Mammary epithelial cell (primary cell): ENCODE measurements at regions of chrX and their contacts with region 1.

Region 1: GRCh38 chrX:119943185-119943988 is at the start of gene NKAP:
- DNase-seq: peak; percentile 87
- H3K4me3 ChIP-seq: peak within 1 kb of the TSS; percentile 57 to 69 (median 62)
- H3K27ac ChIP-seq: peak within 1 kb of the TSS; percentile 77
- H3K4me1 ChIP-seq: peaks cover 5% of the 10 kb centered on the region
- H3K27me3 ChIP-seq: no peaks in the 10 kb centered on the region
- CTCF ChIP-seq: no peak
- total RNA-seq, gene NKAP: 3.0 to 8.1 TPM

Region 2: GRCh38 chrX:119693040-119693995 is 250.1 kb before region 1 on chrX and contains the start of gene SEPTIN6:
- CTCF ChIA-PET with region 1: no interaction called
- dilution Hi-C with region 1: no loop called
- in situ Hi-C with region 1: no loop called
- intact Hi-C with region 1: loop called (anchors 5 kb)
- DNase-seq: peak; percentile 65
- H3K4me3 ChIP-seq: peak within 1 kb of the TSS; percentile 66 to 79 (median 70)
- H3K27ac ChIP-seq: peak within 1 kb of the TSS; percentile 29
- H3K4me1 ChIP-seq: peaks cover 8% of the 10 kb centered on the region
- H3K27me3 ChIP-seq: no peaks in the 10 kb centered on the region
- CTCF ChIP-seq: no peak
- total RNA-seq, gene SEPTIN6: 8.5 to 11.4 TPM

Region 3: DNA sequence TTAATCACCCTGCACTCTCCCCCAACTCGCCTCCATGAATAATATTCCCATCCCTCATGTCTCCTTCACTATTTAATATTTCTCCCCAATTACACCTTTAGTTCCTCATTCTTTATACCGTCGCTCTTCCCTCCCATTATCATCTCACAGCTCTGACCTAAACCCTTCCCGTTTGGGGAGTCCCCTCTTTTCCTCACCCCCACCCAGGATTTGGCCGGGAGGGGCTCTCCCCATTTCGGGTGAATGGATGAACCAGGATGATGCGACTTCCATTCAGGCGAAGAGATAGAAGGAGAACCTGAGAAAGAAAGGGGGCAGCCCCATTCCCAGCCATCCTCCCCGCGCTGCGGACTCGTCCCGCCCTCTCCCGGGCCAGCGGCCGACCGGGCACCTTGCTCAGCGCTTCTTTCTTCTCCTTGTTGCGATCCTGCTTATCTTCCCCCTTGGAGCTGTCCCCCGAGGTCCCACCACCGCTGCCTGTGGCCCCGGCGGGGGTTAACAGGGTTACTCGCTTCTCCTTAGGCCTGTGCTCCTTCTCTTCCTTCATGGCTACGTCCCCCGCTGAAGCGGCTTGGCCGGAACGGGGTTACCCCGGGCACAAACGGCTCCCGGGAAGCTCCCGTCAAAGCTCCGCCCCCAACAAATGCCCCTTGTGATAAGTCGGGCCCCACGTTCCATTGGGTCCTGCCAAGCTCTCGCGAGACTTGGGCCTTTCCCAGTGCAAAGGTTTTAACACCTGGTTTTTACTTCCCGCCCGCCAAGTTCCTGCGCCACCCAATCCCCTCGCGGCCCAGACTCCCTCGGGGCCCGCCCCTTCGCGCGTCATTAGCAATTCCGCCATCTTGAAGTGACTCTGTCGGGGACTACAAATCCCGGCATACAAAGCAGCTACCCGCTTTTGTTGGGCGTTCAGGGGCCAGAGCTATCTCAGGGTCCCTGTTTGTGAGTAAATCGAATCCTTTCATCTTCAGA is 90.7 kb before region 1 on chrX and contains the start of gene UPF3B:
- CTCF ChIA-PET with region 1: no interaction called
- dilution Hi-C with region 1: no loop called
- in situ Hi-C with region 1: no loop called
- intact Hi-C with region 1: loop called (anchors 1 kb)
- DNase-seq: peak; percentile 96
- H3K4me3 ChIP-seq: peak within 1 kb of the TSS; percentile 65 to 76 (median 71)
- H3K27ac ChIP-seq: peak within 1 kb of the TSS; percentile 51
- H3K4me1 ChIP-seq: no peaks in the 10 kb centered on the region
- H3K27me3 ChIP-seq: no peaks in the 10 kb centered on the region
- CTCF ChIP-seq: no peak
- total RNA-seq, gene UPF3B: 1.0 to 10.0 TPM

Region 4: GRCh38 chrX:119991005-119991771 is 47.8 kb after region 1 on chrX:
- CTCF ChIA-PET with region 1: no interaction called
- dilution Hi-C with region 1: no loop called
- in situ Hi-C with region 1: no loop called
- intact Hi-C with region 1: loop called (anchors 5 kb)
- DNase-seq: no peak
- H3K4me3 ChIP-seq: peak overlapping the region in 1 of 3 experiments; percentile 5
- H3K27ac ChIP-seq: no peak overlapping the region
- H3K4me1 ChIP-seq: no peaks in the 10 kb centered on the region
- H3K27me3 ChIP-seq: peaks cover 14% of the 10 kb centered on the region
- CTCF ChIP-seq: no peak

Region 5: DNA sequence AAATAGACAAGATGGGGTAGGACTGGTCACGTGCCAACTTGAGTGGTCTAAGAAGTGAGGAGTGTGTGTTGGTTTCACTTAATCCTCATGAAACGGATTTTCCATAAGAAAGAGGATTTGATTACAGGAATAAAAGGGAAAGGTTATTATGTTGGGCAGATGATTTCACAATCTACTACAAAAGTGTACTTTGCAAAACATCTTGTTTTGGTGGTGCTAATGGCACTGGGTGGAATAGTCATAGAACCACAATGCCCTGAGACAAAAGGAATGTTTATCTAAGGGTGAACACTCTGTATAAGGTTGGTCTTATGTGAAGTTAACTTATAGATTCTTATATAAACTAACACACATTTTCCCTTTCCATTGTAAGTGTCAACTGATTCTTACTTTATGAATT is 1149.6 kb after region 1 on chrX:
- CTCF ChIA-PET with region 1: no interaction called
- dilution Hi-C with region 1: no loop called
- in situ Hi-C with region 1: no loop called
- intact Hi-C with region 1: no loop called
- DNase-seq: no peak
- H3K4me3 ChIP-seq: no peak overlapping the region
- H3K27ac ChIP-seq: no peak overlapping the region
- H3K4me1 ChIP-seq: no peaks in the 10 kb centered on the region
- H3K27me3 ChIP-seq: no peaks in the 10 kb centered on the region
- CTCF ChIP-seq: no peak